CD4-positive, alpha-beta memory T cell (primary cell): ENCODE measurements at regions of chr16 and their contacts with region 1.

Region 1: DNA sequence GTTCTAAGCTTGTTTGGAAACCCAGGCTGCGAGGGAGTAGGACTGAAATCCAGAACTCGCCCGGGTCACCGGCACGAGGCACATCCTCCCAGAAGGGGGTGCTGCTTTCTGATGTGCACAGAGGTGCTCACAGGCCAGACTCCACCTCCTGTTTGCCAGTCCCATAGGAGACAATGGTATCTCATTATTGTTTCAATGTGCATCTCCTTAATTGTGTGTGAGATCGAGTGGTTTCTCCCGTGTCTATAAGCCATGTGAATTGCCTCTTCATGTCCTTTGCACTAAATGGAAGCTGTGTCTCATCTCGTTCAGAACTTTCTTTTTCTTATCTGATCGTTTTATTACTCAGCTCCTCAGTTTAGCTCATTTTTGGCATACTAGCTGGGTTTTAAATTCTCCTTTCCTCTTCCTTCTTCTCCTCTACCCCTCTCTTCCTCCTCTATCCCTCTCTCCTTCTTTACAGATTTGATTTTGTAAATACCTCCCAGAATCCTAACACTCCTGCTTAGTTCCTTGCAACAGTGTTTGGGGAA is 32.1 kb upstream of the PRKCB start:
- DNase-seq: peak; percentile 65 to 71 (median 68)
- H3K4me3 ChIP-seq: no peak overlapping the region
- H3K4me3 Mint-ChIP-seq: peak overlapping the region in 6 of 8 donors; percentile 9 to 56 (median 33)
- H3K27ac ChIP-seq: no peak overlapping the region
- H3K27ac Mint-ChIP-seq: peak overlapping the region in 3 of 7 donors; percentile 18 to 53 (median 34)
- H3K4me1 ChIP-seq: peaks cover 9% of the 10 kb centered on the region
- H3K4me1 Mint-ChIP-seq: peaks cover 8 to 11% (median 10%) of the 10 kb centered on the region in 4 donors
- H3K27me3 ChIP-seq: no peaks in the 10 kb centered on the region
- H3K27me3 Mint-ChIP-seq: no peaks in the 10 kb centered on the region

Region 2: DNA sequence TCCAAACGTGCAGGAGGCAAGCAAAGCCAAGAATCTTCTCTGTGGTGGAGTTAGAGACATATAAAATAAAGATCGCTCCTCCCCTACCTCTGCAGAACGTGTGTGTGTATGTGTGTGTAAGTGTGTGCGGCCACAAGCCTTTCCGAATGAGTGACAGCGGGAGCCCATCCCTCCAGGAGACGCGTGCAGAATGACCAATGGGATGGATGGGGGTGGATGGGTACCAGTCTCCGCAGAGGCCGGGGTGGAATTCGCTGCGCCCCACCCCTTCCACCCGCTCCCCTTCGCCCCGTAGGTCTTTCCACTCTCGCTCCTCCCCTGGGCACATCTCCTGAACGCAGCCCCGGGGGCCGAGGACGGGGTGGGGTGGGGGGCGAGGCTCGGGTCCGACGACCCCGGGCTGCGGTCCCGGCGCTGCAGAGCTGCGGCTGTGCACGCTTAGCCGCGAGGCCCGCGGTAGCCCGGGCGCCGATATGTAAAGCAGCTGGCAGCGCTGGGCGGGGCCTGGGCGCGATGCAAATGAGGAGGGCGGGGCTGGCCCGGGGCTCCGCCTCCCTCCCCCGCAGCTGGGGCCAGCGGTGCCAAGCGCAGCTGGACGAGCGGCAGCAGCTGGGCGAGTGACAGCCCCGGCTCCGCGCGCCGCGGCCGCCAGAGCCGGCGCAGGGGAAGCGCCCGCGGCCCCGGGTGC is 31.9 kb after region 1 on chr16 and contains the start of gene PRKCB:
- CTCF ChIA-PET with region 1: interaction called, 66 read pairs
- POLR2A ChIA-PET with region 1: interaction called, 11 read pairs
- intact Hi-C with region 1: loop called (anchors 1 kb)
- DNase-seq: peak; percentile 89 to 91 (median 90)
- H3K4me3 ChIP-seq: peak within 1 kb of the TSS; percentile 62 to 68
- H3K4me3 Mint-ChIP-seq: peak within 1 kb of the TSS; percentile 97 to 100 (median 99)
- H3K27ac ChIP-seq: peak within 1 kb of the TSS; percentile 57
- H3K27ac Mint-ChIP-seq: peak within 1 kb of the TSS; percentile 90 to 96 (median 92)
- H3K4me1 ChIP-seq: peaks cover 62% of the 10 kb centered on the region
- H3K4me1 Mint-ChIP-seq: peaks cover 48 to 67% (median 54%) of the 10 kb centered on the region in 4 donors
- H3K27me3 ChIP-seq: no peaks in the 10 kb centered on the region
- H3K27me3 Mint-ChIP-seq: no peaks in the 10 kb centered on the region
- total RNA-seq, gene PRKCB: 98.1 to 106 TPM

Region 3: GRCh38 chr16:23858542-23858941 is 54.9 kb after region 1 on chr16:
- CTCF ChIA-PET with region 1: interaction called, 17 read pairs
- POLR2A ChIA-PET with region 1: no interaction called
- intact Hi-C with region 1: loop called (anchors 5 kb)
- DNase-seq: no peak
- H3K4me3 ChIP-seq: no peak overlapping the region
- H3K4me3 Mint-ChIP-seq: peak overlapping the region in 2 of 8 donors; percentile 44 to 45
- H3K27ac ChIP-seq: no peak overlapping the region
- H3K27ac Mint-ChIP-seq: peak overlapping the region in 4 of 7 donors; percentile 32 to 74 (median 52)
- H3K4me1 ChIP-seq: peaks cover 83% of the 10 kb centered on the region
- H3K4me1 Mint-ChIP-seq: peaks cover 64 to 90% (median 79%) of the 10 kb centered on the region in 4 donors
- H3K27me3 ChIP-seq: no peaks in the 10 kb centered on the region
- H3K27me3 Mint-ChIP-seq: no peaks in the 10 kb centered on the region

Region 4: DNA sequence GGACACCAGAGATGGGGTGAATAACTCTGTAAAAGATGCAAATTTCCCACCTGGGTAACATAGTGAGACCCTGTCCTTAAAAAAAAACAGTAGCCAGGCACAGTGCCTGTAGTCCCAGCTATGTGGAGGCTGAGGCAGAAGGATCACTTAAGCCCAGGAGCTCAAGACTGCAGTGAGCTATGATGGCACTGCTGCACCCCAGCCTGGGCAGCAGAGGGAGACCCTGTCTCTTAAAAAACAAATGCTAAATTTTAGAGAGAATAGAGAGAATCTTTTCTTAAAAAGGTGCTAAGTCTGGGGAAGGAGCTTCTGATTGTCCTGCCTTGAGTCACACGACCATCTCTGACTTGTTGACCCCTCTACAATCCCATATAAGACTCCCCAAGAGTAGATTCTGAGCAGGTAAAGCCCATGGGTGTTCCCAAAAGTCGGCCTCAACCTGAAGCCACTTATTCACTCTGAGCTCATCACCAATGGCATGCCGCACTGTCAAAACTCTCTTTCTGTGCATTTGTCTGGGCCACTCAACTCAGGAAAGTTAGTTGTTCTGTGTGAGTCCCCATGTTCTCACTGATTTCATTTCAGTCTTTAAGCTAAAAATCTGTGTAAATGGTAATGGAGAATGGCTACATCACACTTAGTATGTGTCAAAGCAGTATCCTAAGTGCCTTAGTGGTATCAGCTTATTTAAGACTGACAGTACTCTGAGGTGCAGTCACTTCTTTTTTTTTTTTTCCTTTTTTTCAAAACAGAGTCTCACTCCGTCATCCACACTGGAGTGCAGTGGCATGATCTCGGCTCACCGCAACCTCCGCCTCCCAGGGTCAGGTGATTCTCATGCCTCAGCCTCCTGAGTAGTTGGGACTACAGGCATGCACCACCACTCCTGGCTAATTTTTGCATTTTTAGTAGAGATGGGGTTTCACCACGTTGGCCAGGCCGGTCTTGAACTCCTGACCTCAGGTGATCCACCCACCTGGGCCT is 73.7 kb after region 1 on chr16:
- CTCF ChIA-PET with region 1: interaction called, 28 read pairs
- POLR2A ChIA-PET with region 1: no interaction called
- intact Hi-C with region 1: loop called (anchors 5 kb)
- DNase-seq: peak in 2 of 5 donors; percentile 17 to 24
- H3K4me3 ChIP-seq: no peak overlapping the region
- H3K4me3 Mint-ChIP-seq: no peak overlapping the region
- H3K27ac ChIP-seq: no peak overlapping the region
- H3K27ac Mint-ChIP-seq: peak overlapping the region in 5 of 7 donors; percentile 11 to 65 (median 50)
- H3K4me1 ChIP-seq: peaks cover 62% of the 10 kb centered on the region
- H3K4me1 Mint-ChIP-seq: peaks cover 45 to 73% (median 56%) of the 10 kb centered on the region in 4 donors
- H3K27me3 ChIP-seq: no peaks in the 10 kb centered on the region
- H3K27me3 Mint-ChIP-seq: no peaks in the 10 kb centered on the region

Region 5: DNA sequence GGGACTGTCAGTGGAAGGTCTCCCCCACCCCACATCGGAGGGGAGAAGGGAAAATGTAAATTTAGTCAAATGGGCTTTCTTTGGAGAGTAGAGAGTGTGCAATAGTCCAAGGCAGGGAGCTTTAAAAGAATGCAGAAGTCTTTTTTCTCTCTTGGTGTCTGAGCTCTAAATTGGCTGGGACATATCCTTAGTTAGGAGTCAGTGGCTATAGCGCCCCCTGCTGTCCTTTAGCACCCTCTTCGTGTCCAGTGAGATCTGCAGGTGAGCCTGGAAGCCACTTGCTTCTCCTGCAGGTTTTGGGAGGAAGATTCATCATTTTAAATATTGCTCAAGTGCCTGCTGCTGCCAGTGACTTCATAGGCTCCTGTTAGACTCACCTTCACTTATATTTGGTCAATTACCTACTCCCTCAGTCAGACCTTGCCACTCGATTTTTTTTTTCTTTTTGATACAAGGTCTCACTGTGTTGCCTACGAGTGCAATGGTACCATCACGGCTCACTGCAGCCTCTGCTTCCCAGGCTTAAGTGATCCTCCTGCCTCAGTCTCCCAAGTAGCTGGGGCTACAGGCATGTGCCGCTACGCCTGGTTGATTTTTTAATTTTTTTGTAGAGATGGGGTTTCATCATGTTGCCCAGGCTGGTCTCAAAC is 206.9 kb after region 1 on chr16:
- CTCF ChIA-PET with region 1: interaction called, 472 read pairs
- POLR2A ChIA-PET with region 1: interaction called, 31 read pairs
- intact Hi-C with region 1: loop called (anchors 1 kb)
- DNase-seq: peak; percentile 75 to 81 (median 76)
- H3K4me3 ChIP-seq: no peak overlapping the region
- H3K4me3 Mint-ChIP-seq: peak overlapping the region in 2 of 8 donors; percentile 26 to 41
- H3K27ac ChIP-seq: no peak overlapping the region
- H3K27ac Mint-ChIP-seq: peak overlapping the region in 5 of 7 donors; percentile 28 to 76 (median 46)
- H3K4me1 ChIP-seq: peaks cover 50% of the 10 kb centered on the region
- H3K4me1 Mint-ChIP-seq: peaks cover 47 to 81% (median 62%) of the 10 kb centered on the region in 4 donors
- H3K27me3 ChIP-seq: no peaks in the 10 kb centered on the region
- H3K27me3 Mint-ChIP-seq: no peaks in the 10 kb centered on the region

Region 6: GRCh38 chr16:24036614-24037013 is 233.0 kb after region 1 on chr16:
- CTCF ChIA-PET with region 1: interaction called, 176 read pairs
- POLR2A ChIA-PET with region 1: interaction called, 5 read pairs
- intact Hi-C with region 1: loop called (anchors 1 kb)
- DNase-seq: peak in 4 of 5 donors; percentile 28 to 52 (median 34)
- H3K4me3 ChIP-seq: no peak overlapping the region
- H3K4me3 Mint-ChIP-seq: peak overlapping the region in 4 of 8 donors; percentile 9 to 91 (median 47)
- H3K27ac ChIP-seq: no peak overlapping the region
- H3K27ac Mint-ChIP-seq: peak overlapping the region in 5 of 7 donors; percentile 4 to 86 (median 59)
- H3K4me1 ChIP-seq: peaks cover 42% of the 10 kb centered on the region
- H3K4me1 Mint-ChIP-seq: peaks cover 32 to 59% (median 49%) of the 10 kb centered on the region in 4 donors
- H3K27me3 ChIP-seq: no peaks in the 10 kb centered on the region
- H3K27me3 Mint-ChIP-seq: no peaks in the 10 kb centered on the region

Region 7: DNA sequence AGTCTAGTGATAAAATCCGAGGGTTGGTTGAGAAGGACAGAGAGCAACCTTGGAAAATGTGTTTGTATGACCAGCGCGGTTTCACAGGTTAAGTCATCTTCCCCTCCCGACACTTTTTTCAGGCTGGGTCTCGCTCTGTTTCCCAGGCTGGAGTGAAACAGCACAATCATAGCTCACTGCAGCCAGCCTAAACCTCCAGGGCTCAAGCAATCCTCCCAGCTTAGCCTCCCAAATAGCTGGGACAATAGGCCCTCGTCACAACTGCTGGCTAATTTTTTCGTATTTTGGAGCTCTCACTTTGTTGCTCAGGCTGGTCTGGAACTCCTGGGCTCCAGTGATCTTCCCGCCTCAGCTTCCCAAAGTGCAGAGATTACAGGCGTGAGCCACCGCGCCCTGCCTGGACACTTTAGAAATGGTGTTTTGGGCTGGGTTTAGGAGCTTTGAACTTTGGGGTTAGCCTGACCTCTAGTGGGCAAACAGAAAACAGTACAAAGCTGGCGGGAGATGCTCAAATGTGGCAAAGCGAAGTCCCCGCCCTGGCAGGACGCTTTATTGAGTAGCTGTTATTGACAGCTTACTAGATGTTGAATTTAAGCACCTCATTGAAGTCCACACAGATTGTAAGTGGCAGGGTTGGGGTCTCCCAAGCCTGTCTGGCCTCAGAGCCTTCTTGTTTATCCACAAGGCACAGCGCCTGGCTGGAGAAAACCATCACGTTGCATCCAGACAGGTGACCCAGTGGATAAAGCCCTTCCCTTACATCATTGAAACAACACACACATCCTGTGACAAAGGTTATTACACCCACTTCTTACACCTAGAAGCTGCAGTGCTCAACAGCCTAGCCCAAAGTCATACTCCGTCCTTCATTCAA is 701.1 kb after region 1 on chr16:
- CTCF ChIA-PET with region 1: interaction called, 9 read pairs
- POLR2A ChIA-PET with region 1: no interaction called
- intact Hi-C with region 1: loop called (anchors 1 kb)
- DNase-seq: peak in 4 of 5 donors; percentile 51 to 61 (median 55)
- H3K4me3 ChIP-seq: no peak overlapping the region
- H3K4me3 Mint-ChIP-seq: no peak overlapping the region
- H3K27ac ChIP-seq: no peak overlapping the region
- H3K27ac Mint-ChIP-seq: no peak overlapping the region
- H3K4me1 ChIP-seq: no peaks in the 10 kb centered on the region
- H3K4me1 Mint-ChIP-seq: peaks cover 0 to 3% (median 0%) of the 10 kb centered on the region in 4 donors
- H3K27me3 ChIP-seq: peaks cover 4% of the 10 kb centered on the region
- H3K27me3 Mint-ChIP-seq: peaks cover 9 to 10% of the 10 kb centered on the region in 2 donors